AG04449 (cell line): ENCODE measurements at regions of chr7 and their contacts with region 1.

Region 1: GRCh38 chr7:992709-993607 is 10.0 kb downstream of the CYP2W1 start:
- DNase-seq: peak; percentile 70
- H3K4me3 ChIP-seq: no peak overlapping the region
- CTCF ChIP-seq: peak; percentile 100

Region 2: GRCh38 chr7:909358-910329 is 83.3 kb before region 1 on chr7:
- CTCF ChIA-PET with region 1: interaction called, 16 read pairs
- POLR2A ChIA-PET with region 1: no interaction called
- DNase-seq: no peak
- H3K4me3 ChIP-seq: peak overlapping the region; percentile 36
- CTCF ChIP-seq: no peak

Region 3: DNA sequence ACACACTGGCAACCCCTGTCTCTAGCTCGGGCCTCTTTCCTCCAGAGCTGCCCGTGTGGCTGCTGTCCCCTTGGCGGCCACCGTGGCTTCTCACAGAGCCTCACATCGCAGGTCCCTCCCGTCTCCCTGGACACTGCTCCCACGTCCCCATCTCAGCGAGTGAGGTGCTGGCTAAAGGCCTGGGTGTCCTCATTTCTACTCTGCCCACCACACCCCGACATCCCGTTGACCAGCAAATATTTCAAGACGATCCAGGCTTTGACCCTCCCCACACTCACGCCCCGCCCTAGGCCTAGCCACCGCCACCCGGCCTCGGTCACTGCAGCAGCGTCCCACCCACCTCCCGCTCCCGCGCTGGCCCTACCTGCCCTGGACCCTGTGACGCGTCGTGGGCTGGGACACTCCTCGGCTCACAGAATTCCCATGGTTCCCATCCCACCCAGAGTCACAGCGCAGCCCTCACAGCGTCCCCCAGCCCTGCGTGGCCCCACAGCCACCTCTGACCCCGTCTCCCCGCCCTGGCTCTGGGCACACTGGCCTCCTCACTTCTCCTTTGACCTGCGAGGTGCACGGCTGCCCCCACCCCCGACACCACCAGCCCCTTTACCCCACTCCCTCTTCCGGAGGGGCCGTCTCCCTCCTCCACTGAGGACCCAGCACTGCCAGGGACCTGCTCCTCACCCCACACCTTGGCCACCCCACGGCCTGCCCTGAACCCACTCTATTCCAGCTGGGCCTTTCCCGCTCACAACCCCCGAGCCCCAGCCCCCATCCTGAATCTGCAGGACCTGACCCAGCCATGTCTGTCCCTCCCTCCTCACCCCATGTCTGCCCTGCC is 45.3 kb before region 1 on chr7:
- CTCF ChIA-PET with region 1: no interaction called
- POLR2A ChIA-PET with region 1: no interaction called
- DNase-seq: no peak
- H3K4me3 ChIP-seq: no peak overlapping the region
- CTCF ChIP-seq: no peak

Region 4: DNA sequence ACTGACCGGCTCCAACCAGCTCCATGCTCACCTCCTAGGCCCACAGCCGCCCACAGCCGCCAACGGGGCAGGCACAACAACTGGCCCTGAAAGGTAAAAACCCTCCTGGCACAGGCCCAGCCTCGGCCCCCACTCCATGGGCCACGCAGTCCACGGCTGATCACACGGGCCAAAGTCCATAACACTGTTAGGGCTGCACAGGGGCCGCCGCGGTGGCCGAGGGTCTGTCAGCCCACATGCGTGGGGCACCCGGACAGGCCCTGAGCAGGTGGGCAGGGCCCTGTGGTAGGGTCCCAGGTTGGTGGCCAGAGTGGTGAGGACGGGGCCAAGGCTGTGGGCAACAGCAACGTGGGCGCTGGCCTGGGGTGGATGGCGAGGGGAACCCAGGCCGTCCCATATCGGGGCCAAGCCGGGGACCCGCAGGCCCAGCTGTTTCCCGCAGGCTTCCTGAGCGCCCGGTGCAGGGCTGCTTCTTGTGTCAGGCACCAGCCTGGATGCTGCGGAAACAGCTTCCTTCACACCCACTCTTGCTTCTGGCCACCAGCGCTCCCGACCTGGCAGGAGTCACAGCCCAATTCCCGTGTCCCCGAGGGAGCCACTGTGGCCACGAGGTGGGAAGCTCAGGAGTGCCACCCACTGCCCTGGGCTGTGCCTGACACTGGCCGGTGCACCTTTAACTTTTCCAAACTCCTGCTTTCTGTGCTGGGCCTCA is 19.2 kb after region 1 on chr7:
- CTCF ChIA-PET with region 1: interaction called, 22 read pairs
- POLR2A ChIA-PET with region 1: no interaction called
- DNase-seq: no peak
- H3K4me3 ChIP-seq: no peak overlapping the region
- CTCF ChIP-seq: no peak

Region 5: GRCh38 chr7:1044191-1045068 is 51.5 kb after region 1 on chr7 and contains the start of gene GPR146:
- CTCF ChIA-PET with region 1: interaction called, 45 read pairs
- POLR2A ChIA-PET with region 1: no interaction called
- DNase-seq: peak; percentile 71
- H3K4me3 ChIP-seq: peak within 1 kb of the TSS; percentile 71
- CTCF ChIP-seq: peak; percentile 78

Region 6: GRCh38 chr7:1076181-1077072 is 83.5 kb after region 1 on chr7:
- CTCF ChIA-PET with region 1: interaction called, 47 read pairs
- POLR2A ChIA-PET with region 1: no interaction called
- DNase-seq: no peak
- H3K4me3 ChIP-seq: no peak overlapping the region
- CTCF ChIP-seq: no peak

Region 7: DNA sequence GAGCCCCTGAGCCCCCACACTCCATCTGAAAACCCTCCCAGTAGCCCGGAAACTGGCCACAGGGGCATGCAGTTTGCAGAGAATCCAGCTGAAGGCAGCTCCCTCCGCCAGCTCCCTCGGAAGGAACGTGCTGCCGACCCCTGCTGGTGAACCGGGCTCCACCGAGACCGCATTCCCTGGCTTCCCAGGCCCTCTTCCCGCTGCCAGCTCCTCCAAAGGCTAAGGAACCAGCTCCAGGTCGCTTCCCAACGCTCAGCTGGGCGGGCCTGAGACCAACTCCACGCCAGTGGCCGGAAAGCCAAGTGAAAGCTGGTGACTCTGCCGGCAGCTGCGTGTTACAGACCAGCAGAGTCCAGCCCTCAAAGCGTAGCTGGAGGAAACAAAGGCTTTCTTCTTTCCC is 130.8 kb after region 1 on chr7:
- CTCF ChIA-PET with region 1: interaction called, 21 read pairs
- POLR2A ChIA-PET with region 1: no interaction called
- DNase-seq: no peak
- H3K4me3 ChIP-seq: no peak overlapping the region
- CTCF ChIP-seq: peak; percentile 73

Region 8: GRCh38 chr7:1159891-1160668 is 167.1 kb after region 1 on chr7 and contains the start of gene ZFAND2A:
- CTCF ChIA-PET with region 1: interaction called, 17 read pairs
- POLR2A ChIA-PET with region 1: no interaction called
- DNase-seq: peak; percentile 67
- H3K4me3 ChIP-seq: peak within 1 kb of the TSS; percentile 99
- CTCF ChIP-seq: no peak